Activated T-helper 1 cell treated with anti-CD3 and anti-CD28 coated beads, Interleukin-12 subunit alpha, Interleukin-12 subunit beta, Interleukin-2, Interleukin-4 antibody, amounts not matched to agents 30 ng/mL and 10 ng/mL and 1 ng/mL, durations not matched to agents 14 hours and 24 hours and 36 hours (primary cell): ENCODE measurements at regions of chr17 and their contacts with region 1.

Region 1: GRCh38 chr17:76726231-76726775 is at the start of gene JMJD6:
- DNase-seq: peak; percentile 95
- H3K4me3 Mint-ChIP-seq: peak within 1 kb of the TSS; percentile 95
- H3K27ac Mint-ChIP-seq: peak within 1 kb of the TSS; percentile 96
- H3K4me1 Mint-ChIP-seq: peaks cover 42% of the 10 kb centered on the region
- H3K27me3 Mint-ChIP-seq: no peaks in the 10 kb centered on the region
- total RNA-seq, gene JMJD6: 80.5 TPM in 2 replicates

Region 2: GRCh38 chr17:76671123-76671911 is 55.0 kb before region 1 on chr17:
- intact Hi-C with region 1: loop called (anchors 1 kb)
- DNase-seq: peak; percentile 99
- H3K4me3 Mint-ChIP-seq: peak overlapping the region; percentile 93
- H3K27ac Mint-ChIP-seq: peak overlapping the region; percentile 90
- H3K4me1 Mint-ChIP-seq: peaks cover 30% of the 10 kb centered on the region
- H3K27me3 Mint-ChIP-seq: peaks cover 10% of the 10 kb centered on the region

Region 3: DNA sequence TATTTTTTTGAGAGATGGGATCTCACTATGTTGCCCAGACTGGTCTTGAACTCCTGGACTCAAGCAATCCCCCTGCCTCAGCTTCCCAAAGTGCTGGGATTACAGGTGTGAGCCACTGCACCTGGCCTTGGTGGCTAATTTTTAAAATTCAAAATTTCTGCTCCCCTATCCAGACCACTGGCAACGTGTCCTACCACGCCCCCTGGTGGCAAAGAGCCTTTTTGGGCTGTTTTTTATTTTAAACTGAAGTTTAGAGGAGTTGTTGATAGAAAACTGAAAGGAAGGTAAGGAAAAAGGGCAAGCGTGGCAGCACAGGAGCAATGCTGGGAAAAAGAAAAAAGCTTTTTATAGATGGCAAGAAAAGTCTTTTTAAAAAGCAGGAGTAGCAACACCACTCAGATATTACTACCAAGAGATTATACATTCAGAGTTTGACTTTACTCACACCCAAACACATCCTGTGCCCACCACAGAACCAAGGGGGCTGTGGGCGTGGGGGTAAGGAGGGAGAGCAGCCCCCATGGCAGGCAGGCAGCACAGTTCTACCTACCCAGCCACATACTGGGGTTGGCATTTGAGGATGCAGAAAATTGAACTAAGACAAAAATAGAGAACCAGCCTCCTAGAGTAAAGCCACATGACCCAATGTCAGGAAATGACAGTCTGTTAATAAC is 11.3 kb before region 1 on chr17:
- intact Hi-C with region 1: loop called (anchors 1 kb)
- DNase-seq: peak; percentile 62
- H3K4me3 Mint-ChIP-seq: no peak overlapping the region
- H3K27ac Mint-ChIP-seq: peak overlapping the region; percentile 16
- H3K4me1 Mint-ChIP-seq: peaks cover 34% of the 10 kb centered on the region
- H3K27me3 Mint-ChIP-seq: no peaks in the 10 kb centered on the region

Region 4: DNA sequence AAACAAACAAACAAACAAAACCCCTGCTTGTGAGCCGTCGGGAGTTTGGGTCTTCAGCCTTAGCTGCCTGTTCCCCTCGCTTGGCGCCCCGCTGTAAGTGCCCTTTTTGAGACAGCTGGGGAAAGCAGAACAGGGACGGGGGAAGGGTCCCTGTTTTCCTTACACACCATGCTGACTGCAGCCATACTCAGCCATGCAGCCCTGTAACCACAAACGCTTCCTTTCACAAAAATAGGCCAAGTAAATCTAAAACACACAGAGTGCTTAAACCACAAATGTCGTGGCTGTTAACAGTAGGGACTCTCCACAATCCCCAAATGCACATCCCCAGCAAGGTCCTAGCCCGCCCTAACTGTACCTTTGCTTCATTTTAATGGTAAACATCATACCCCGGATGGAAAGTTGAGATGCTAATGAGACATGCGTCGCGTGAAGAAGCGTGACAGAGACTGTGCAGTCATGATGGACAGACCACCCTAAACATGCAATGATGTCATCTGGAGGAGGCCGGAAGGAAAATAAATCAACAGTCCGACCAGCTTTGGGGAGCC is 271.8 kb after region 1 on chr17:
- intact Hi-C with region 1: loop called (anchors 2 kb)
- DNase-seq: peak; percentile 73
- H3K4me3 Mint-ChIP-seq: peak overlapping the region; percentile 57
- H3K27ac Mint-ChIP-seq: peak overlapping the region; percentile 96
- H3K4me1 Mint-ChIP-seq: peaks cover 47% of the 10 kb centered on the region
- H3K27me3 Mint-ChIP-seq: no peaks in the 10 kb centered on the region